B cell (primary cell): ENCODE measurements at regions of chr11 and their contacts with region 1.

Region 1: GRCh38 chr11:77066229-77067042 is at the start of gene CAPN5:
- DNase-seq: peak; percentile 92
- ATAC-seq: peak; percentile 96
- H3K4me3 ChIP-seq: peak within 1 kb of the TSS; percentile 48 to 83 (median 69)
- H3K4me3 Mint-ChIP-seq: peak within 1 kb of the TSS; percentile 95
- H3K27ac ChIP-seq: peak within 1 kb of the TSS in 1 of 2 donors; percentile 28
- H3K27ac Mint-ChIP-seq: peak within 1 kb of the TSS; percentile 89
- H3K4me1 ChIP-seq: peaks cover 11 to 16% of the 10 kb centered on the region in 2 donors
- H3K4me1 Mint-ChIP-seq: peaks cover 12% of the 10 kb centered on the region
- H3K27me3 ChIP-seq: peaks cover 0 to 3% (median 0%) of the 10 kb centered on the region in 4 experiments
- H3K27me3 Mint-ChIP-seq: peaks cover 9% of the 10 kb centered on the region
- CTCF ChIP-seq: peak; percentile 52
- total RNA-seq, gene CAPN5: 0.74 and 2.3 TPM in 2 replicates

Region 2: GRCh38 chr11:76860539-76861475 is 205.6 kb before region 1 on chr11 and contains the start of gene ACER3:
- CTCF ChIA-PET with region 1: no interaction called
- POLR2A ChIA-PET with region 1: no interaction called
- intact Hi-C with region 1: loop called (anchors 2 kb)
- DNase-seq: peak; percentile 90
- ATAC-seq: peak; percentile 99
- H3K4me3 ChIP-seq: peak within 1 kb of the TSS; percentile 32 to 81 (median 80)
- H3K4me3 Mint-ChIP-seq: peak within 1 kb of the TSS; percentile 92
- H3K27ac ChIP-seq: peak within 1 kb of the TSS; percentile 69 to 87
- H3K27ac Mint-ChIP-seq: peak within 1 kb of the TSS; percentile 81
- H3K4me1 ChIP-seq: peaks cover 19 to 22% of the 10 kb centered on the region in 2 donors
- H3K4me1 Mint-ChIP-seq: peaks cover 28% of the 10 kb centered on the region
- H3K27me3 ChIP-seq: no peaks in the 10 kb centered on the region
- H3K27me3 Mint-ChIP-seq: no peaks in the 10 kb centered on the region
- CTCF ChIP-seq: no peak
- total RNA-seq, gene ACER3: 11.3 and 12.9 TPM in 2 replicates

Region 3: DNA sequence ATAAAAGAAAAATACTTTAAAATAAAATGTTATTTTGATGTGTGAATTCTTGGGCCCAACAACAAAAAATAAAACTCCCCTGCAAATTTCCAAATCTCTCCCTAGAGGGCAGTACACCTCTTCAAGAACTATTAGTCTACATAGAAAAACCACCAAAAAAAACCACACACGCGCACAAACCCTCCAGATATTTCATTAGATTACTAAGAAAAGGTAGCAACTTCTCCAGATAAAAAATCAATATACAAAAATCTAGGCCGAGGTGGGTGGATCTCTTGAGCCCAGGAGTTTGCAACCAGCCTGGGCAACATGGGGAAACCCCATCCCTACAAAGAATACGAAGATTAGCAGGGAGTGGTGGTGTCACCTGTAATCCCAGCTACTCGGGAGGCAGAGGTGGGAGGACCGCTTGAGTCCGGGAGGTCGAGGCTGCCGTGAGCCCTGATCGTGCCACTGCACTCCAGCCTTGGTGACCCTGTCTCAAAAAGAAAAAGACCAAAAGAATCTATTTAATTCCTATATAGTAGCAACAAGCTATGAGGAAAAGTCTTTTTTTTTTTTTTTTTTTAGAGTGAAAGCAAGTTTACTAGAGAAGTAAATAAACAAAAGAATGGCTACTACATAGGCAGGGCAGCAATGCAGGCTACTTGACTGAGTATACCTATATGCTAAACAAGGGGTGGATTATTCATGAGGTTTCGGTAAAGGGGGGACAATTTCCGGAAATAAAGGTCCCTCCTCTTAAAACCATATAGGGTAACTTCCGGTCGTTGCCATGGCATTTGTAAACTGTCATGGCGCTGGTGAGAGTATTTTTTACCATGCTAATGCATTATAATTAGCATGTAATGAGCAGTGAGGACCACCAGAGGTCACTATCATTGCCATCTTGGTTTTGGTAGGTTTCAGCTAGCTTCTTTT is 19.2 kb before region 1 on chr11:
- CTCF ChIA-PET with region 1: interaction called, 18 read pairs
- POLR2A ChIA-PET with region 1: interaction called, 3 read pairs
- intact Hi-C with region 1: loop called (anchors 1 kb)
- DNase-seq: peak; percentile 95
- ATAC-seq: peak; percentile 86
- H3K4me3 ChIP-seq: peak overlapping the region in 4 of 5 experiments; percentile 20 to 70 (median 46)
- H3K4me3 Mint-ChIP-seq: peak overlapping the region; percentile 67
- H3K27ac ChIP-seq: no peak overlapping the region
- H3K27ac Mint-ChIP-seq: peak overlapping the region; percentile 53
- H3K4me1 ChIP-seq: peaks cover 14 to 15% of the 10 kb centered on the region in 2 donors
- H3K4me1 Mint-ChIP-seq: peaks cover 13% of the 10 kb centered on the region
- H3K27me3 ChIP-seq: peaks cover 0 to 29% (median 17%) of the 10 kb centered on the region in 4 experiments
- H3K27me3 Mint-ChIP-seq: peaks cover 35% of the 10 kb centered on the region
- CTCF ChIP-seq: peak; percentile 67

Region 4: DNA sequence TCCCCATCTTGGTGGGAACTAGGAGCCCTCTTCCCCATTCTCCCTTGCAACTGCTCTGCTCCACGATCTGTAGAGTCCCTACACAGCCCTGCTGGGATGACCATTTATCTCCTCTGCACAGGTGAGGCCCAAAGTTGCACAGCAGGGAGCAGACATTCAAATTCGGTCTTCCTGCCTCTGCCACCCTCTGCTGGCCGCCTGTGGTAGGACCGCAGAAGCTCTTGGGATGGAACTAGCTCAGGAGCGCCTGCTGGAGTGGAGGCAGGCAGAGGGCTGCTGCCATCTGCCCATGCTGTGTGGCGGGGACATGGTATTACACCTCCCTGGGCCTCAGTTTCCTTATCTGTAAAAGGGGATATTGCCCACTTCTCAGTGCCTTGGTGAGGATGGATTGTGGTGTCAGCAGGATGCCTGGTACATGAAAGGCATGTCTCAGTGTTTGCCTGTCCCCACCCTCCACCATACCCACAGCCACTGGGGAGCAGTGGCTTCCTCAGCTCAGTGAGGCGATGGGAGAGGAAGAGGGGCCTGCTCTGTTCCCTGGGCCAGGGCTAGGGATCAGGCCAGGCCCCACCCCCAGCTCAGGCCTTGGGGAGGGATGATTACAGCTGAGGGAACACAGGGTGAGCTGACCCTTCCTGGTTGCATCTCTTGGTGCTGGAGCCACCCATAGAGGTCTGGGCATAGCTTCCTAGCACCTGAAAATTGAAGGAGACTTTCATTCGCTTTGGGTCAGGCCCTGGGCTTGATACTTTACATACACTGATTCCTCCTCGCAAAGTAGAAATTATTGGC is 24.9 kb after region 1 on chr11:
- CTCF ChIA-PET with region 1: interaction called, 16 read pairs
- POLR2A ChIA-PET with region 1: no interaction called
- intact Hi-C with region 1: loop called (anchors 1 kb)
- DNase-seq: peak; percentile 75
- ATAC-seq: peak; percentile 91
- H3K4me3 ChIP-seq: no peak overlapping the region
- H3K4me3 Mint-ChIP-seq: no peak overlapping the region
- H3K27ac ChIP-seq: no peak overlapping the region
- H3K27ac Mint-ChIP-seq: no peak overlapping the region
- H3K4me1 ChIP-seq: no peaks in the 10 kb centered on the region
- H3K4me1 Mint-ChIP-seq: no peaks in the 10 kb centered on the region
- H3K27me3 ChIP-seq: no peaks in the 10 kb centered on the region
- H3K27me3 Mint-ChIP-seq: no peaks in the 10 kb centered on the region
- CTCF ChIP-seq: peak; percentile 84

Region 5: GRCh38 chr11:77411717-77412441 is 345.4 kb after region 1 on chr11:
- CTCF ChIA-PET with region 1: no interaction called
- POLR2A ChIA-PET with region 1: no interaction called
- intact Hi-C with region 1: loop called (anchors 5 kb)
- DNase-seq: peak; percentile 88
- ATAC-seq: peak; percentile 96
- H3K4me3 ChIP-seq: peak overlapping the region; percentile 50 to 83 (median 78)
- H3K4me3 Mint-ChIP-seq: peak overlapping the region; percentile 95
- H3K27ac ChIP-seq: peak overlapping the region; percentile 32 to 68
- H3K27ac Mint-ChIP-seq: peak overlapping the region; percentile 85
- H3K4me1 ChIP-seq: peaks cover 14 to 28% of the 10 kb centered on the region in 2 donors
- H3K4me1 Mint-ChIP-seq: peaks cover 28% of the 10 kb centered on the region
- H3K27me3 ChIP-seq: no peaks in the 10 kb centered on the region
- H3K27me3 Mint-ChIP-seq: no peaks in the 10 kb centered on the region
- CTCF ChIP-seq: no peak

Region 6: GRCh38 chr11:77473801-77474683 is 407.6 kb after region 1 on chr11 and contains the start of gene PAK1:
- CTCF ChIA-PET with region 1: no interaction called
- POLR2A ChIA-PET with region 1: no interaction called
- intact Hi-C with region 1: loop called (anchors 5 kb)
- DNase-seq: peak; percentile 99
- ATAC-seq: peak; percentile 79
- H3K4me3 ChIP-seq: peak within 1 kb of the TSS; percentile 31 to 74 (median 64)
- H3K4me3 Mint-ChIP-seq: peak within 1 kb of the TSS; percentile 90
- H3K27ac ChIP-seq: peak within 1 kb of the TSS; percentile 61 to 64
- H3K27ac Mint-ChIP-seq: peak within 1 kb of the TSS; percentile 86
- H3K4me1 ChIP-seq: peaks cover 13% of the 10 kb centered on the region in 2 donors
- H3K4me1 Mint-ChIP-seq: peaks cover 17% of the 10 kb centered on the region
- H3K27me3 ChIP-seq: peaks cover 0 to 4% (median 2%) of the 10 kb centered on the region in 4 experiments
- H3K27me3 Mint-ChIP-seq: peaks cover 6% of the 10 kb centered on the region
- CTCF ChIP-seq: peak; percentile 40
- total RNA-seq, gene PAK1: 18.6 and 23.4 TPM in 2 replicates